ENCODE measurements at regions of chr10 and their contacts with region 1.

Region 1: DNA sequence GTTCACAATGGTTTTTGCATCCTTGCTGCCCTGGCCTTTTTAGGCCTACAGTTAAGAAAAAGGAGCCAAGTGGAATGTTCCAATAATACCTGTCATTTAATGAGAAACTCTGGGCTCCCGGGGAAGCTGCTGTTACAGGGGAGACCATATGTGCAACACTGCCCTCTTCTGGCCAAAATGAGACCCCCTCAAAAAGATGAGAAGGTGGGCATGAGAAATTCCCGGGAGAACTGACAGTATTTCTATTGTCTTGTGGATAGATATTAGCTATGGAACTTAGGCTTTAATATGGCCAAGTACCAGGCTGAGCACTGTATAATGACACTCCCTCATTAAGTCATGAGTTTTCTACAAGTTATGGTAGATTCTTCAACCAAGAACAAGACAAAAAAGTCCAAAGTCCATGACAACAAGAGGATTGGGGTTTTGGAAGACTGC is 99.4 kb downstream of the CCDC3 start:
- DNase-seq: peak in 8 of 9 donors; percentile 2 to 53 (median 32)
- ATAC-seq: peak; percentile 52
- H3K4me3 ChIP-seq: no peak overlapping the region
- H3K4me3 Mint-ChIP-seq: no peak overlapping the region
- H3K27ac ChIP-seq: no peak overlapping the region
- H3K27ac Mint-ChIP-seq: no peak overlapping the region
- H3K4me1 ChIP-seq: no peaks in the 10 kb centered on the region
- H3K4me1 Mint-ChIP-seq: peaks cover 0 to 3% (median 0%) of the 10 kb centered on the region in 7 donors
- H3K27me3 ChIP-seq: no peaks in the 10 kb centered on the region
- H3K27me3 Mint-ChIP-seq: peaks cover 4 to 26% (median 13%) of the 10 kb centered on the region in 5 donors

Region 2: GRCh38 chr10:12214763-12215218 is 687.4 kb before region 1 on chr10:
- CTCF ChIA-PET with region 1: interaction called, 3 read pairs
- POLR2A ChIA-PET with region 1: no interaction called
- intact Hi-C with region 1: loop called (anchors 1 kb)
- DNase-seq: peak in 7 of 9 donors; percentile 27 to 62 (median 47)
- ATAC-seq: peak; percentile 69
- H3K4me3 ChIP-seq: no peak overlapping the region
- H3K4me3 Mint-ChIP-seq: peak overlapping the region; percentile 61 to 84 (median 72)
- H3K27ac ChIP-seq: peak overlapping the region; percentile 38
- H3K27ac Mint-ChIP-seq: peak overlapping the region; percentile 73 to 96 (median 87)
- H3K4me1 ChIP-seq: no peaks in the 10 kb centered on the region
- H3K4me1 Mint-ChIP-seq: peaks cover 5 to 37% (median 20%) of the 10 kb centered on the region in 7 donors
- H3K27me3 ChIP-seq: no peaks in the 10 kb centered on the region
- H3K27me3 Mint-ChIP-seq: no peaks in the 10 kb centered on the region

Region 3: DNA sequence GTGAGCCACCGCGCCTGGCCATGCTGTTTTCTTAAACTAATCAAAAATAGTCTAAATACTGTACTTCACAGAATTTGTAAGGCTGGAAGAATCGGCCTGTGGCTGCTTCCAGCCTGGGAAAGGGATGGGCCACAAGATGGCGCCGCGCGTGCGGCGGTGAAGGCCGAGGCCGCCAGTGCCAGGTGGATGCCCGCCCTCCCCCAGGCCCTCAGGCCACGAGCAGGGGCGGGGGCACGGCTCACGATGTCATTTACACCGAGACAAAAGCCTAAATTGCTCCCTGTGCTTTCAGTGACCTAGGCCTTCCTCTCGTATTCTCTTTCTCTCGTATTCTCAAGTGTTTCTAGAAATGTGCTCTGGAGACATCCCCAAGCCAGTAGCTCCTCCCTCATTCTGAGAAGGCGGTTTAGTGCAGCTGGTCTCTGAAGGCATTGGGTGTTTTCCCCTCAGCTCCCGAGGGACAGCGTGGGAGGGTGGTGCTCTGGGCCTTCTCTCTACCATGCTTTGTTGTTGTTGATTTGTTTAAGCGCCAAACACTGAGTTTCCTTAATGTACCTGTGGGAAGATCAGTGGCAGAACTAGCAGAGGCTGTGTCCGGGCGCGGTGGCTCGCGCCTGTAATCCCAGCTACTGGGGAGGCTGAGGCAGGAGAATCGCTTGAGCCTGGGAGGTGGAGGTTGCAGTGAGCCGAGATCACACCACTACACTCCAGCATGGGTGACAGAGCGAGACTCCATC is 637.8 kb before region 1 on chr10:
- CTCF ChIA-PET with region 1: no interaction called
- POLR2A ChIA-PET with region 1: no interaction called
- intact Hi-C with region 1: loop called (anchors 1 to 2 kb)
- DNase-seq: peak; percentile 45 to 75 (median 67)
- ATAC-seq: peak; percentile 73
- H3K4me3 ChIP-seq: peak overlapping the region; percentile 45
- H3K4me3 Mint-ChIP-seq: peak overlapping the region; percentile 58 to 81 (median 72)
- H3K27ac ChIP-seq: no peak overlapping the region
- H3K27ac Mint-ChIP-seq: peak overlapping the region in 7 of 9 donors; percentile 10 to 87 (median 51)
- H3K4me1 ChIP-seq: no peaks in the 10 kb centered on the region
- H3K4me1 Mint-ChIP-seq: peaks cover 0 to 26% (median 5%) of the 10 kb centered on the region in 7 donors
- H3K27me3 ChIP-seq: no peaks in the 10 kb centered on the region
- H3K27me3 Mint-ChIP-seq: no peaks in the 10 kb centered on the region

Region 4: GRCh38 chr10:12782537-12782936 is 119.6 kb before region 1 on chr10:
- CTCF ChIA-PET with region 1: no interaction called
- POLR2A ChIA-PET with region 1: no interaction called
- intact Hi-C with region 1: loop called in 1 of 2 experiments (anchors 2 kb)
- DNase-seq: peak in 4 of 9 donors; percentile 0 to 20 (median 4)
- ATAC-seq: no peak
- H3K4me3 ChIP-seq: no peak overlapping the region
- H3K4me3 Mint-ChIP-seq: no peak overlapping the region
- H3K27ac ChIP-seq: no peak overlapping the region
- H3K27ac Mint-ChIP-seq: peak overlapping the region in 1 of 9 donors; percentile 33
- H3K4me1 ChIP-seq: no peaks in the 10 kb centered on the region
- H3K4me1 Mint-ChIP-seq: peaks cover 0 to 6% (median 5%) of the 10 kb centered on the region in 7 donors
- H3K27me3 ChIP-seq: no peaks in the 10 kb centered on the region
- H3K27me3 Mint-ChIP-seq: no peaks in the 10 kb centered on the region